ENCODE measurements at regions of chr3 and their contacts with region 1.

Region 1: DNA sequence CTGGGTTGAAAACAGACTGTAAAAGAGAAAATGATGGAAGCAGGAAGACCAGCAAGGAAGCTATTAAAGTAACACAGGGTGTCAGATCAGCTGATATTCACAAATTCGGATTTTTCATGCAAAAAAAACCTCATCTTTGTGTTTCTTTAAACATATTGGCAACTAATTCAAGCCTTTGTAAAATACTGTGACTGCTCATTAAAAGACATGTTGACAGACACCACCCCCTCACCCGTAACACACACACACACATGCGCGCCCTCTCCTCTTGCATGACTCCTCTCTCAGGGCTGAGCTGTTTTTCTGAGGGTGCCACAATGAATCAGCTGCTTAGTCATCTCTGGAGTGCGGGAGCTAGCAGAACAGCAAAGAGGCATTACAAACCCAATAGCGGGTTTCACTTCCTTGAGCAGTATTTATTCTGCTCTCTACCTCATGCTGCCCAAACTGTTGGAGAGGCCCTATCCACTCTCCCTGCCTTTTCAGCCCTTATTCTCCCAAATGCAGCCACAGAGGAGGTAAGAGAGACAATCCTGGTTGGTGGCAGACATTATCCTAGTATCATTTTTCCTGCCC is 35.8 kb upstream of the CCDC80 start:
- DNase-seq: peak; percentile 94
- ATAC-seq: peak; percentile 98
- H3K4me3 Mint-ChIP-seq: no peak overlapping the region
- H3K27ac Mint-ChIP-seq: peak overlapping the region; percentile 27
- H3K4me1 Mint-ChIP-seq: peaks cover 41% of the 10 kb centered on the region
- H3K27me3 Mint-ChIP-seq: peaks cover 19% of the 10 kb centered on the region

Region 2: GRCh38 chr3:112086076-112086854 is 590.5 kb before region 1 on chr3 and contains the start of gene C3orf52:
- CTCF ChIA-PET with region 1: no interaction called
- POLR2A ChIA-PET with region 1: no interaction called
- intact Hi-C with region 1: no loop called
- DNase-seq: peak; percentile 83
- ATAC-seq: peak; percentile 91
- H3K4me3 Mint-ChIP-seq: peak within 1 kb of the TSS; percentile 84
- H3K27ac Mint-ChIP-seq: peak within 1 kb of the TSS; percentile 80
- H3K4me1 Mint-ChIP-seq: peaks cover 43% of the 10 kb centered on the region
- H3K27me3 Mint-ChIP-seq: no peaks in the 10 kb centered on the region
- total RNA-seq, gene C3orf52: 8.7 to 9.3 TPM

Region 3: GRCh38 chr3:112642912-112643506 is 33.7 kb before region 1 on chr3:
- CTCF ChIA-PET with region 1: interaction called, 4 read pairs
- POLR2A ChIA-PET with region 1: no interaction called
- intact Hi-C with region 1: loop called (anchors 1 to 2 kb)
- DNase-seq: peak; percentile 90
- ATAC-seq: peak; percentile 98
- H3K4me3 Mint-ChIP-seq: peak overlapping the region; percentile 48
- H3K27ac Mint-ChIP-seq: peak overlapping the region; percentile 58
- H3K4me1 Mint-ChIP-seq: peaks cover 17% of the 10 kb centered on the region
- H3K27me3 Mint-ChIP-seq: peaks cover 3% of the 10 kb centered on the region

Region 4: GRCh38 chr3:112958811-112959560 is 282.2 kb after region 1 on chr3:
- CTCF ChIA-PET with region 1: no interaction called
- POLR2A ChIA-PET with region 1: no interaction called
- intact Hi-C with region 1: loop called in 1 of 2 experiments (anchors 1 kb)
- DNase-seq: peak; percentile 36
- ATAC-seq: peak; percentile 97
- H3K4me3 Mint-ChIP-seq: peak overlapping the region; percentile 66
- H3K27ac Mint-ChIP-seq: peak overlapping the region; percentile 80
- H3K4me1 Mint-ChIP-seq: peaks cover 37% of the 10 kb centered on the region
- H3K27me3 Mint-ChIP-seq: no peaks in the 10 kb centered on the region

Region 5: DNA sequence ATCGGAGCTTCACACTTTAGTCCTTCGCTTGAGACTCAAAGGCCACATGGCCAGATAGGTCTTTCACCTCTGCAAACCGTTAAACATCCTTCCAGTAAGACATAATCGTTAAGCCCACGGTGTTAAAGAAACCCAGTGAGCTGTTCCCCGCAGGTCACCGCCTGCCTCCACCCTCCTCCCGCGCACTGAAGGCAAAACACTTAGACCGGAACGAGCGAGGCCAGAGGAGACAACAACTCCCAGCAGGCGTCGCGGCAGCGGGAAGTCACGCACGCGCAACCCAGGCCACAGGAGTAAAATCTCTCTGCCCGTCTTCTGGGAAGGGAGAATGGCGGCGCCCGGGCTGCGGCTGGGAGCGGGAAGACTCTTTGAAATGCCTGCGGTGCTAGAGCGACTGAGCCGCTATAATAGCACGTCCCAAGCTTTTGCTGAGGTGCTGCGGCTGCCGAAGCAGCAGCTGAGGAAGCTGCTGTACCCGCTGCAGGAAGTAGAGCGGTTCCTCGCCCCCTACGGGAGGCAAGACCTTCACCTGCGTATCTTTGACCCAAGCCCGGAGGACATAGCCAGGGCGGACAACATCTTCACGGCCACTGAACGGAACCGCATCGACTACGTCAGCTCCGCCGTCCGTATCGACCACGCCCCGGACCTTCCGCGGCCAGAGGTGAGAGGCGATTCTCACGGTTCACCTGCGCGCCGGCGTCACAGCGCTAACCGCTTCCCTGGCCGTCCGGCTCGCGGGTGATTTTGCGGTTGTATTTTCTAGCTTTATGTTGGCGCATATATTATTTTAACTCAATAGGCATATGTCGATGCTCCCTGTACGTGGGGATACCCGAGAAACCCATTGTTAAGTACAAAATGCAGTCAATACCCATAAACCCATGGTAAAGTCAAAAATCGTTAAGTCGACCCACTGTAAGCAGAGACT is 314.2 kb after region 1 on chr3 and contains the start of gene GTPBP8:
- CTCF ChIA-PET with region 1: interaction called, 3 read pairs
- POLR2A ChIA-PET with region 1: no interaction called
- intact Hi-C with region 1: loop called in 1 of 2 experiments (anchors 5 kb)
- DNase-seq: peak; percentile 95
- ATAC-seq: peak; percentile 96
- H3K4me3 Mint-ChIP-seq: peak within 1 kb of the TSS; percentile 81
- H3K27ac Mint-ChIP-seq: peak within 1 kb of the TSS; percentile 94
- H3K4me1 Mint-ChIP-seq: peaks cover 70% of the 10 kb centered on the region
- H3K27me3 Mint-ChIP-seq: no peaks in the 10 kb centered on the region
- total RNA-seq, gene GTPBP8: 34.3 to 43.0 TPM

Region 6: GRCh38 chr3:113019182-113020137 is 342.7 kb after region 1 on chr3:
- CTCF ChIA-PET with region 1: no interaction called
- POLR2A ChIA-PET with region 1: interaction called, 3 read pairs
- intact Hi-C with region 1: loop called in 1 of 2 experiments (anchors 1 kb)
- DNase-seq: peak; percentile 96
- ATAC-seq: peak; percentile 90
- H3K4me3 Mint-ChIP-seq: peak overlapping the region; percentile 85
- H3K27ac Mint-ChIP-seq: peak overlapping the region; percentile 94
- H3K4me1 Mint-ChIP-seq: peaks cover 55% of the 10 kb centered on the region
- H3K27me3 Mint-ChIP-seq: no peaks in the 10 kb centered on the region

Region 7: GRCh38 chr3:114192136-114192535 is 1515.4 kb after region 1 on chr3:
- CTCF ChIA-PET with region 1: no interaction called
- POLR2A ChIA-PET with region 1: no interaction called
- intact Hi-C with region 1: no loop called
- DNase-seq: no peak
- ATAC-seq: no peak
- H3K4me3 Mint-ChIP-seq: no peak overlapping the region
- H3K27ac Mint-ChIP-seq: no peak overlapping the region
- H3K4me1 Mint-ChIP-seq: peaks cover 7% of the 10 kb centered on the region
- H3K27me3 Mint-ChIP-seq: no peaks in the 10 kb centered on the region

Measured in activated CD4-positive, alpha-beta T cell treated with anti-CD3 and anti-CD28 coated beads for 36 hours (primary cell).